ENCODE measurements at regions of chr9 and their contacts with region 1.

Region 1: GRCh38 chr9:15510789-15511575 is at the start of gene PSIP1:
- DNase-seq: peak; percentile 77 to 93 (median 85)
- ATAC-seq: peak; percentile 83
- H3K4me3 ChIP-seq: peak within 1 kb of the TSS; percentile 87 to 93
- H3K4me3 Mint-ChIP-seq: peak within 1 kb of the TSS; percentile 89
- H3K27ac ChIP-seq: peak within 1 kb of the TSS; percentile 91 to 98
- H3K27ac Mint-ChIP-seq: peak within 1 kb of the TSS; percentile 100
- H3K4me1 ChIP-seq: peaks cover 46% of the 10 kb centered on the region
- H3K4me1 Mint-ChIP-seq: peaks cover 51% of the 10 kb centered on the region
- H3K27me3 ChIP-seq: no peaks in the 10 kb centered on the region
- H3K27me3 Mint-ChIP-seq: no peaks in the 10 kb centered on the region
- CTCF ChIP-seq: no peak
- total RNA-seq, gene PSIP1: 93.5 to 96.0 TPM

Region 2: DNA sequence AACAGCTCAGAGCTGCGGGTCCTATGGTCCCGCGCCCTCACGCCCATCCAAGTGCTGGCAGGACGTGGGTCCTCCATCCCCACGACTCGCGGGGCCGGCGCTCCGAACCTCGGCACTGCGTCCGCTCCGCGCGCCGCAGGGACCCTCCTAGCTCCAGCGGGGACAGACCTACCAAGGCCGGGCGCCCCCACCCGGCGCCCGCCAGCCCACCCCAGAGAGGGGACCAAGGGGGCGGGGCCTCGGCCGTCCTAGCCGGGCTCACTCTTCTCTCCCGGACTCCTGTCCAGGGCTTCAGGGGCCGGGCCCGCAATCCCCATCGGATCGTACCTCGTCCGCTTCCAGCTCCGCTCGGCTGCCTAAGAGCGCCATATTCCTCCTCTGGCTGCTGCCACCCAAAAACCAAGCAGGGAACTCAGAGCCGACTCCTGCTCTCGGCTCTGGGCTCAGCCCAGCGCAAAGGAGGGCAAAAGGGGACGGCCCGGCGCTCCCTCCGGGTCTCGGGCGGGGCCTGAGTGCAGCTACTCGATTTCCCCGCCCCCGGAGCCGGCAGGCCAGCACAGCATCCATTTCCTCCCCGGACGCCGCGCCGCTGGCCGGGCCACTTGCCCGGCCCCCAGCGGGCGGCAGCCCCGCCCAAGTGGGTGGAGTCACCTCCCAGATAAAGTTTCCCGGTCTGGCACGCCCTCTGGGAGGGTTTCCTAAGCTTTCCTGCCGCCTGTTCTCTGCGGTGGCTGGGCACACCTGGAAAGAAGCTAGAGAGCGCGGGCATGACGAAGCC is 204.0 kb before region 1 on chr9 and contains the start of gene TTC39B:
- CTCF ChIA-PET with region 1: no interaction called
- POLR2A ChIA-PET with region 1: interaction called, 4 read pairs
- intact Hi-C with region 1: loop called in 1 of 2 experiments (anchors 1 kb)
- DNase-seq: peak; percentile 51 to 90 (median 72)
- ATAC-seq: peak; percentile 75
- H3K4me3 ChIP-seq: peak within 1 kb of the TSS; percentile 85 to 91
- H3K4me3 Mint-ChIP-seq: peak within 1 kb of the TSS; percentile 97
- H3K27ac ChIP-seq: peak within 1 kb of the TSS; percentile 67 to 73
- H3K27ac Mint-ChIP-seq: peak within 1 kb of the TSS; percentile 93
- H3K4me1 ChIP-seq: peaks cover 45% of the 10 kb centered on the region
- H3K4me1 Mint-ChIP-seq: peaks cover 57% of the 10 kb centered on the region
- H3K27me3 ChIP-seq: no peaks in the 10 kb centered on the region
- H3K27me3 Mint-ChIP-seq: no peaks in the 10 kb centered on the region
- CTCF ChIP-seq: no peak
- total RNA-seq, gene TTC39B: 23.3 to 23.8 TPM

Region 3: GRCh38 chr9:15469406-15469805 is 41.6 kb before region 1 on chr9:
- CTCF ChIA-PET with region 1: no interaction called
- POLR2A ChIA-PET with region 1: interaction called, 6 read pairs
- intact Hi-C with region 1: loop called in 1 of 2 experiments (anchors 5 kb)
- DNase-seq: no peak
- ATAC-seq: no peak
- H3K4me3 ChIP-seq: no peak overlapping the region
- H3K4me3 Mint-ChIP-seq: no peak overlapping the region
- H3K27ac ChIP-seq: no peak overlapping the region
- H3K27ac Mint-ChIP-seq: peak overlapping the region; percentile 28
- H3K4me1 ChIP-seq: no peaks in the 10 kb centered on the region
- H3K4me1 Mint-ChIP-seq: peaks cover 14% of the 10 kb centered on the region
- H3K27me3 ChIP-seq: no peaks in the 10 kb centered on the region
- H3K27me3 Mint-ChIP-seq: no peaks in the 10 kb centered on the region
- CTCF ChIP-seq: no peak

Region 4: GRCh38 chr9:15522130-15522755 is 11.3 kb after region 1 on chr9:
- CTCF ChIA-PET with region 1: no interaction called
- POLR2A ChIA-PET with region 1: interaction called, 12 read pairs
- intact Hi-C with region 1: no loop called
- DNase-seq: no peak
- ATAC-seq: no peak
- H3K4me3 ChIP-seq: no peak overlapping the region
- H3K4me3 Mint-ChIP-seq: no peak overlapping the region
- H3K27ac ChIP-seq: no peak overlapping the region
- H3K27ac Mint-ChIP-seq: no peak overlapping the region
- H3K4me1 ChIP-seq: no peaks in the 10 kb centered on the region
- H3K4me1 Mint-ChIP-seq: peaks cover 2% of the 10 kb centered on the region
- H3K27me3 ChIP-seq: no peaks in the 10 kb centered on the region
- H3K27me3 Mint-ChIP-seq: peaks cover 3% of the 10 kb centered on the region
- CTCF ChIP-seq: no peak

Region 5: GRCh38 chr9:15552636-15553527 is 41.9 kb after region 1 on chr9 and contains the start of gene CCDC171:
- CTCF ChIA-PET with region 1: interaction called, 9 read pairs
- POLR2A ChIA-PET with region 1: interaction called, 88 read pairs
- intact Hi-C with region 1: loop called (anchors 1 kb)
- DNase-seq: peak; percentile 67 to 96 (median 84)
- ATAC-seq: peak; percentile 79
- H3K4me3 ChIP-seq: peak within 1 kb of the TSS; percentile 88 to 98
- H3K4me3 Mint-ChIP-seq: peak within 1 kb of the TSS; percentile 95
- H3K27ac ChIP-seq: peak within 1 kb of the TSS; percentile 54 to 75
- H3K27ac Mint-ChIP-seq: peak within 1 kb of the TSS; percentile 82
- H3K4me1 ChIP-seq: no peaks in the 10 kb centered on the region
- H3K4me1 Mint-ChIP-seq: peaks cover 9% of the 10 kb centered on the region
- H3K27me3 ChIP-seq: no peaks in the 10 kb centered on the region
- H3K27me3 Mint-ChIP-seq: no peaks in the 10 kb centered on the region
- CTCF ChIP-seq: no peak
- total RNA-seq, gene CCDC171: 1.1 to 1.7 TPM

Region 6: DNA sequence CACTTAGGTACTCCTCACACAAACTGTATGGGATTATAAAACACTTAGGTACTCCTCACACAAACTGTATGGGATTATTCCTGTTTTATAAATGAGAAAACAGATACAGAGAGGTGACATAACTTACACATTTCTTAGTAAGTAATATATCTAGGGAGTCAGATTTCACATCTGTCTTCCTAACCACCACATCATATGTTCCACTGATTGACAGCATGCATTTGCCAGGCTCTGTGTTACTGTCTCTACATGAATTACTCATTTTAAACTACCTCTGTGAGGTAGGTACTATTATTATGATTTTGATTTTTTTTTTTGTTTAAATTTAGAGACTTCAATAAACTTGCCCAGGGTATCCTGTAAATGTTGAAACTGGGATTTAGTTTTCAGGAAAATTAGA is 274.6 kb after region 1 on chr9:
- CTCF ChIA-PET with region 1: no interaction called
- POLR2A ChIA-PET with region 1: no interaction called
- intact Hi-C with region 1: no loop called
- DNase-seq: no peak
- ATAC-seq: no peak
- H3K4me3 ChIP-seq: no peak overlapping the region
- H3K4me3 Mint-ChIP-seq: no peak overlapping the region
- H3K27ac ChIP-seq: no peak overlapping the region
- H3K27ac Mint-ChIP-seq: no peak overlapping the region
- H3K4me1 ChIP-seq: no peaks in the 10 kb centered on the region
- H3K4me1 Mint-ChIP-seq: no peaks in the 10 kb centered on the region
- H3K27me3 ChIP-seq: no peaks in the 10 kb centered on the region
- H3K27me3 Mint-ChIP-seq: no peaks in the 10 kb centered on the region
- CTCF ChIP-seq: no peak